GM10248 (cell line): ENCODE measurements at regions of chr5 and their contacts with region 1.

Region 1: GRCh38 chr5:141691867-141692532 is 10.0 kb upstream of the ARAP3 start:
- DNase-seq: peak; percentile 88
- CTCF ChIP-seq: peak; percentile 98

Region 2: GRCh38 chr5:141664732-141665461 is 27.1 kb before region 1 on chr5:
- CTCF ChIA-PET with region 1: interaction called, 30 read pairs
- POLR2A ChIA-PET with region 1: no interaction called
- DNase-seq: peak; percentile 88
- CTCF ChIP-seq: peak; percentile 86

Region 3: GRCh38 chr5:141732417-141733113 is 40.6 kb after region 1 on chr5:
- CTCF ChIA-PET with region 1: interaction called, 14 read pairs
- POLR2A ChIA-PET with region 1: no interaction called
- DNase-seq: no peak
- CTCF ChIP-seq: no peak

Region 4: GRCh38 chr5:141835928-141836670 is 144.1 kb after region 1 on chr5:
- CTCF ChIA-PET with region 1: interaction called, 10 read pairs
- POLR2A ChIA-PET with region 1: no interaction called
- DNase-seq: no peak
- CTCF ChIP-seq: no peak

Region 5: DNA sequence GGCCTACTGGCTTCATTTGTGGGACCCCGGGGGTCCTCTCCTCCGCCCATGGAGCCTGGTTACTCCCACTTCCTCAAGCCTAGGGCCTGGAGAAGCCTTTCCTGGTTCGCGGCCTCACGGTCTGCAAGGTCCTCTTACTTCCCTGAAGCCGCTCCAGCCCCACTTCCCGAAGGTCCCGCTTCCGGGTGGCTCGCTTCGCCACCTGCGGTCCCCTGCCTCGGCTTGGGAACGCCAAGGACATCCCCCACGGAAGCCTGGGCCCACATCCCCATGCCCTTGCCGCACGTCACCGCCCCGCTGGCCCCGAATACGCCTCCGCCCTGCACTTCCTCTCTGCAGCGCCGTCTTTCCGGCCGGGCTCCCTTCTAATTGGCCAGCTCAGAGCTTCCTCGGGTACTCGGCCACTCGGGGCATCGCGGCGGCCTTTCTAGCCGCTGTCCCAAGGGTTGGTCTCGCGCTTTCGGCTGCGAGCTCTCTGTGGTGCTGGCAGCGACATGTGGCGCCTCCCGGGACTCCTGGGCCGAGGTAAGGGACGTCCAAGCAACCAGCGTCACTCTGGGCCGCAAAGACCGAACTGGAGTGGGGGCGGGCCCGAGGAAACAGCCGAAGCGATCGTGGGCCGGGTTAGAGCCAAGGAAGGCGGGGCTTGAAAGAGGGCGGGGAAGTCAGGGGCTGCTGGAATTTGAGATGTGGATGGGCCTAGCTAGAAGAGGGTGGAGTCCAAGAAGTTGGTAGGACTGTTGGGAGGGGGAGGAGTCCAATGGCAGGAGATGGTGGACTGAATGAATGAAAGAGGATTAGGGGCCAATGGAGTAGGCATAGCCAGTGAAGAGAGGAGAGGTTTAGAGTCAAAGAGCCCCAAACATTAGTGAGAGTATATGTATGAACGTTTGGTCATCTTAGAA is 231.7 kb after region 1 on chr5 and contains the start of gene DELE1:
- CTCF ChIA-PET with region 1: interaction called, 12 read pairs
- POLR2A ChIA-PET with region 1: no interaction called
- DNase-seq: peak; percentile 95
- CTCF ChIP-seq: no peak

Region 6: GRCh38 chr5:141960449-141961202 is 268.6 kb after region 1 on chr5:
- CTCF ChIA-PET with region 1: interaction called, 119 read pairs
- POLR2A ChIA-PET with region 1: no interaction called
- DNase-seq: peak; percentile 87
- CTCF ChIP-seq: peak; percentile 87